ENCODE measurements at regions of chr16 and their contacts with region 1.

Region 1: GRCh38 chr16:19067349-19068236 is at the start of gene COQ7:
- DNase-seq: peak; percentile 100
- H3K4me3 ChIP-seq: peak within 1 kb of the TSS; percentile 83
- H3K27ac ChIP-seq: peak within 1 kb of the TSS; percentile 87
- H3K4me1 ChIP-seq: peaks cover 8% of the 10 kb centered on the region
- CTCF ChIP-seq: no peak
- total RNA-seq, gene COQ7: 19.9 and 22.2 TPM in 2 replicates

Region 2: GRCh38 chr16:18789850-18790724 is 277.5 kb before region 1 on chr16 and contains the start of gene RPS15A:
- CTCF ChIA-PET with region 1: no interaction called
- POLR2A ChIA-PET with region 1: no interaction called
- intact Hi-C with region 1: loop called (anchors 5 kb)
- DNase-seq: peak; percentile 98
- H3K4me3 ChIP-seq: peak within 1 kb of the TSS; percentile 85
- H3K27ac ChIP-seq: peak within 1 kb of the TSS; percentile 64
- H3K4me1 ChIP-seq: peaks cover 42% of the 10 kb centered on the region
- CTCF ChIP-seq: no peak
- total RNA-seq, gene RPS15A: 2,355 and 2,645 TPM in 2 replicates

Region 3: DNA sequence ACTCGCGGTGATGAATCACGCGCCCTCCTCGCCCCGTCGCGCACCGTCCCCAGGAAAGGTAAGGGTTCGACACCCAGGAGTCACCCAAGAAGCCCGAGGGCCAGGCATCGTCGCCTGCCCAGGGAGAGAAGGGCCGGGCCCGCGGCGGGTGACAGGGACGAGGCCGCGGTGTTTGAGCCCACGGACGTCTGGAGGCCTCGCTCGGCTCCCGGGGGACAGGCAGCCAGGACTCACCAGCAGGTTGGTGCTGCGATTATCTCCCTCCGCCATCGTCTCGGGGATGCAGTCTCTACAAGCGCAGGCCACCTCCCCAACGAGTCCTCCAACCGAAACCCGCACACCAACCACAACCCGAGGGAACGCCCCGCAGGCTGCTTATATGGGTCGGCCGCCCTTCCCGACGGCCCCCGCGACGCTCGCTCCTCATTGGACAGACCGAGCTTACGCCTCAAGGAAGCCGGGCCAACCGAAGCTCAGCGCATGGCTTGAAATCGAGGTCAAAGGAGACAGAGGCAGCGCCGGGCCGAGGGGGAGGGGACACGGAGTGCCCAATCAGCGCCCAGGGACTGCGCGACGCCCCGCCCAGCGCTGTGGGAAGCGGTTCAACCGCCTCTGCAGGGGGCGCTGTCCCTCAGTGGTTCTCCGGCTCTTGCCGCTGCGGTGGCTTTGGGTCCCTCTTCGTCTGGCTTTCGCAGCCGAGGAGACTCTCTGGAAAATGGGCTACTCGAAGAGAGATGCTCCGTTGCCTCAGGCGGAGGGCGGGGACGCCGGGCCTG is 266.2 kb before region 1 on chr16 and contains the start of gene ARL6IP1:
- CTCF ChIA-PET with region 1: no interaction called
- POLR2A ChIA-PET with region 1: no interaction called
- intact Hi-C with region 1: loop called (anchors 1 kb)
- DNase-seq: peak; percentile 100
- H3K4me3 ChIP-seq: peak within 1 kb of the TSS; percentile 99
- H3K27ac ChIP-seq: peak within 1 kb of the TSS; percentile 89
- H3K4me1 ChIP-seq: peaks cover 66% of the 10 kb centered on the region
- CTCF ChIP-seq: peak; percentile 85
- total RNA-seq, gene ARL6IP1: 322 and 349 TPM in 2 replicates

Region 4: DNA sequence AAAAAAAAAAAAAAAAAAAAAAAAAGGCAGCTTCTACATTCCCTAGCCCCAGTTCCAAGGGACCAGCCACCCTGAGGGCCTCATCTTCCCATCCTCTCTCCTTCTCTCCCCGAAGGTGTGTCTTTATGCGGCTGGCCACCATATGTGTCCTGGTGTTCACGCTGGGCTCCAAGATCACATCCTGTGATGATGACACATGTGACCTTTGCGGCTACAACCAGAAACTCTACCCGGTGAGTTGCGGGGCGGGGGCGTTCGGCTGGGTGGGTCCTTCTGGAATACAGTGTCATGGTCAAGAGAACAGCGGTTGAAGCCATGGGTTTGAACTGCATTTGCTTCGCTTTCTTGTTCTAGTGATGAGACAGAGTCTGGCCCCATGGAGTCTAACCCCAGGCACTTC is 22.8 kb before region 1 on chr16:
- CTCF ChIA-PET with region 1: no interaction called
- POLR2A ChIA-PET with region 1: no interaction called
- intact Hi-C with region 1: no loop called
- DNase-seq: no peak
- H3K4me3 ChIP-seq: no peak overlapping the region
- H3K27ac ChIP-seq: no peak overlapping the region
- H3K4me1 ChIP-seq: no peaks in the 10 kb centered on the region
- CTCF ChIP-seq: no peak

Region 5: DNA sequence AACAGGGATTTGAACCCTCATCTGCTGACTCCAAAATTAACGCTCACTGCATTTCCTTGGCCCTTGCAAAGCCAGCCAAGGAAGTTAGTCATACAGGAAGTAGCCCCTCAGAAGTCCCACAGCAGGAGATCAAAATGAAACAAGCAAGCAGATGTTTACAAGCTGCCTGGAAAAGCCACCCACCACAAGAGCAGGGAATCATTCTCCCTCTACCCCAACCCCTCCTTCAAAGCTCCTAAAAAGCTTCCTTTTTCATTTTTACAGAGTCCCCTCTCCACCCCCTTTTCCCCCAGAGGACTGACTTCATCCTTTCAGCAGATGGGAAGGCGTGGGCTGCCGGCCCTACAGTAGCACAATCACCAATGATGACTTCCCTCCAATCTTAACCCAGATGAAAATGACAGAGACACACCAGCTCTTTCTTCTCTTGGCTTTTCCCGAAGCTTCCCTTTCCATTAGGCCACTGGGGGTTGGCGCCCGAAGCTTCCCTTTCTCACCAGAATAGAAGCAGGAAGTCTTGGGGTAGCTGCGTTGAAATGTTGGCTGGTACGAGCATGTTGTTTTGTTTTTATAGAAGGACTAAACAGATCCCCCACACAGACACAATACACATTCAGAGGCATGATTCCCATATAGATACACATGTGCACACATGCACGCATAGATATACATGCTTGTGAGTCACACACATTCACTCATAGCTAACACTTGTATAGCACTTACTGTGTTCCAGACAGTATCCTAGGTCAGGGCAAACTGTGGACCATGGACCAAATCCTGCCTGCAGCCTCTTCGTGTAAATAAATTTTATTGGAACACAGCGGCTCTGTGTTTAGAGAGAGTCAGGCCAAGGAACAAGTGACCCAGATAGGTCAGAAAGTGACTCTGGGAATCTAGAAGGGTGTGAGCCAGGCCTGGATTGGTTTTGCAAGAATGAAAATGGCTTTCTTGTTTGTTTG is 63.5 kb after region 1 on chr16:
- CTCF ChIA-PET with region 1: no interaction called
- POLR2A ChIA-PET with region 1: no interaction called
- intact Hi-C with region 1: no loop called
- DNase-seq: peak; percentile 37
- H3K4me3 ChIP-seq: peak overlapping the region; percentile 9
- H3K27ac ChIP-seq: no peak overlapping the region
- H3K4me1 ChIP-seq: peaks cover 11% of the 10 kb centered on the region
- CTCF ChIP-seq: no peak

Region 6: GRCh38 chr16:19210280-19210924 is 142.8 kb after region 1 on chr16:
- CTCF ChIA-PET with region 1: no interaction called
- POLR2A ChIA-PET with region 1: no interaction called
- intact Hi-C with region 1: loop called (anchors 1 kb)
- DNase-seq: peak; percentile 89
- H3K4me3 ChIP-seq: peak overlapping the region; percentile 65
- H3K27ac ChIP-seq: peak overlapping the region; percentile 99
- H3K4me1 ChIP-seq: peaks cover 50% of the 10 kb centered on the region
- CTCF ChIP-seq: peak; percentile 60

Region 7: DNA sequence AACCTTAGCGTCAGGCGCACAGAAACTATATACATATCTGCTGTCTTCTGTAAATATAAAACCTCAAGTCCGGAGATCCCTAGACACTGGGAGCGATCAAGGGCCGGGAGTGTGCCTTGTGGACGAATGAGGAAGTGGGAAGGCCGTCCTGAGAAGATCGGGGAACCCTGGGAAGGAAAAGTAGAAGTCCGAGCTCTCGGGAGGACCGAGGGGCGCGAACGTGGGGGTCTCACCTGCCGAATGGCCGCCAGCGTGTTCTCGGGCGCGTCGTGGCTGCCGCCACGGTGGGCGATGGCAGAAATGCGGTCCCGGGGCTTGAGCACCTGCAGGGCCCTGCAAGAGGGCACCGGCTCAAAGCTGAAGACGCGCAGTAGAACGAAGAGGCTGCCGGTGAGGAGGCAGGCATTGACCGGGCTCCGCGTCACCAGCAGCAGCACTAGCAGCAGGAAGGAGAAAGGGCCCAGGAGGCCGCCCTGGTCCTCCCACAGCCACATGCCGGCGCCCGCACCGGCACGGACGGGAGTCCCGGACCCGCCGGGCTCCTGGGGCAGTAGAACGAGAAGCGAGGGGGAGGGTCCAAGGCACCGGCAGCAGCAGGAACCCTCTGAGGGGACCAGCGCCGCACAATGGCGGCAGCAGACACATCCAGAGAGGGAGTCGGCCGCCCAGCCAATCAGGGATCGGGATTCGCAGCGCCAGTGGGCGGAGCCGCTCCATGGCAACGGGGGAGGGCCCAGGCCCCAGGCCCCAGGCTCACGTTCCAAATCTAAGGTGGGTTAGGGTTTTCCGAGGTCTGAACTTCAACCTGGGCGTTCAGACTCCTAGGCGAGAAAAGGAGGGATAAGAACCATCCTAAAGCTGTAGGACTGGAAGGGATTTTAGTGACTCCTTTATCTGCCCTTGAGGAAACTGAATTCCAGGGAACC is 454.1 kb after region 1 on chr16 and contains the start of gene GDE1:
- CTCF ChIA-PET with region 1: no interaction called
- POLR2A ChIA-PET with region 1: interaction called, 4 read pairs
- intact Hi-C with region 1: loop called (anchors 5 kb)
- DNase-seq: peak; percentile 94
- H3K4me3 ChIP-seq: peak within 1 kb of the TSS; percentile 83
- H3K27ac ChIP-seq: peak within 1 kb of the TSS; percentile 70
- H3K4me1 ChIP-seq: peaks cover 52% of the 10 kb centered on the region
- CTCF ChIP-seq: peak; percentile 62
- total RNA-seq, gene GDE1: 18.5 and 23.4 TPM in 2 replicates